ENCODE measurements at regions of chr16 and their contacts with region 1.

Region 1: DNA sequence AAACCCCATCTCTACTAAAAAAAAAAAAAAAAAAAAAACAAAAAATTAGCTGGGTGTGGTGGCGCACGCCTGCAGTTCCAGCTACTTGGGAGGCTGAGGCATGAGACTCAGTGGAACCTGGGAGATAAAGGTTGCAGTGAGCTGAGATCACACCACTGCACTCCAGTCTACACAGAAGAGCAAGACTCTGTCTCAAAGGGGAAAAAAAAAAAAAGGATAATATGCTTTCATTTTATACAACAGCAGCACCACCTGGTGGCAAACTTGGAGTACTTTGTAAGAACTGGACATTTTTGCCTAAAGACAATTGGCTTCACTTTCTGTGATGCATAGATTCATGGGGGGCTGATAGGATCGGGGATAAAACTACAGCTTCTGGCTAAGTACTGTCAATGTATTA is 8.5 kb downstream of the CHTF8 start:
- DNase-seq: peak in 2 of 3 donors; percentile 56 to 71
- ATAC-seq: peak in 1 of 2 donors; percentile 45
- H3K4me3 ChIP-seq: no peak overlapping the region
- H3K27ac ChIP-seq: no peak overlapping the region
- H3K4me1 ChIP-seq: no peaks in the 10 kb centered on the region
- H3K27me3 ChIP-seq: no peaks in the 10 kb centered on the region

Region 2: DNA sequence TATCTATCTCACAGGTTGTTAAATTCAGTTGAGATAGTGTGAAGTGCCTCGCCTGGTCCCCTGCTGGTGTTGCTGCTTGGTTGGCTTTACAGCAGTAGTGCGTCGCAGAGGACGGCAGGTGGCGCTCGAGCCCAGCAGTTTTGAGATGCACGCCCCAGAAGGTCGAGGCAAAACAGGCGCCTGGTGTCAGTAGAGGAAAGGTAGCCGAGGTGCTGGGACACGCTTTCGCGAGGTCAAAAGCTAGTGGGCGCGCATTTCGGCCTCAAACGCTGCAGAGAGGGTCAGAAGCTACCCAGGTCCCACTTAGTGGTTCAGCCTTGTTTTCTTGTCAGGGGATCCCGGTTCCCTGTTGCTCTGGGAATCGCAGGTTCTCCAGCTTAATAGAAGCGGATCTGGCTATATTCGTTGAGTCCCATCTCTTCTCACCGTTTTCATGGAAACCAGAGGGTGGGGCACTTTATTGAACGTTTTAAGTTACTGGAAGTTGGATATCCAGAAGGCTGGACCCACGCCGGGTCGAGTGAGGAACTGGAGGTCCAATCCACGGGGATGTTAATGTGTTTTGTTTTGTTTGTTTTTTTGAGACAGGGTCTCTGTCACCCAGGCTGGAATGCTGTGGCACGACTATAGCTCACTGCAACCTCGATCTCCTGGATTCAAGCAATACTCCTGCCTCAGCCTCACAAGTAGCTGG is 595.1 kb before region 1 on chr16:
- intact Hi-C with region 1: loop called in 1 of 4 experiments (anchors 5 kb)
- DNase-seq: peak; percentile 82 to 93 (median 92)
- ATAC-seq: peak; percentile 91 to 93
- H3K4me3 ChIP-seq: no peak overlapping the region
- H3K27ac ChIP-seq: no peak overlapping the region
- H3K4me1 ChIP-seq: no peaks in the 10 kb centered on the region
- H3K27me3 ChIP-seq: no peaks in the 10 kb centered on the region

Region 3: GRCh38 chr16:68737046-68737729 is 386.7 kb before region 1 on chr16 and contains the start of gene CDH1:
- intact Hi-C with region 1: no loop called
- DNase-seq: peak in 2 of 3 donors; percentile 54 to 58
- ATAC-seq: peak; percentile 59 to 63
- H3K4me3 ChIP-seq: peak within 1 kb of the TSS; percentile 2
- H3K27ac ChIP-seq: no peak within 1 kb of the TSS
- H3K4me1 ChIP-seq: no peaks in the 10 kb centered on the region
- H3K27me3 ChIP-seq: no peaks in the 10 kb centered on the region
- total RNA-seq, gene CDH1: not detected

Region 4: GRCh38 chr16:68851601-68852000 is 272.3 kb before region 1 on chr16:
- intact Hi-C with region 1: loop called in 1 of 4 experiments (anchors 10 kb)
- DNase-seq: no peak
- ATAC-seq: no peak
- H3K4me3 ChIP-seq: no peak overlapping the region
- H3K27ac ChIP-seq: no peak overlapping the region
- H3K4me1 ChIP-seq: no peaks in the 10 kb centered on the region
- H3K27me3 ChIP-seq: no peaks in the 10 kb centered on the region

Region 5: GRCh38 chr16:68948230-68948910 is 175.5 kb before region 1 on chr16:
- intact Hi-C with region 1: no loop called
- DNase-seq: no peak
- ATAC-seq: no peak
- H3K4me3 ChIP-seq: no peak overlapping the region
- H3K27ac ChIP-seq: no peak overlapping the region
- H3K4me1 ChIP-seq: no peaks in the 10 kb centered on the region
- H3K27me3 ChIP-seq: no peaks in the 10 kb centered on the region